Activated naive CD4-positive, alpha-beta T cell treated with anti-CD3 and anti-CD28 coated beads for 36 hours (primary cell): ENCODE measurements at regions of chr3 and their contacts with region 1.

Region 1: GRCh38 chr3:171459942-171460724 is at the start of gene TNIK:
- DNase-seq: peak; percentile 96
- H3K4me3 Mint-ChIP-seq: peak within 1 kb of the TSS; percentile 84
- H3K27ac Mint-ChIP-seq: peak within 1 kb of the TSS; percentile 88
- H3K4me1 Mint-ChIP-seq: peaks cover 36% of the 10 kb centered on the region
- H3K27me3 Mint-ChIP-seq: no peaks in the 10 kb centered on the region
- total RNA-seq, gene TNIK: 27.0 to 28.8 TPM

Region 2: GRCh38 chr3:170357176-170357919 is 1102.8 kb before region 1 on chr3 and contains the start of gene SKIL:
- CTCF ChIA-PET with region 1: no interaction called
- intact Hi-C with region 1: loop called (anchors 10 kb)
- DNase-seq: peak; percentile 97
- H3K4me3 Mint-ChIP-seq: peak within 1 kb of the TSS; percentile 96
- H3K27ac Mint-ChIP-seq: peak within 1 kb of the TSS; percentile 95
- H3K4me1 Mint-ChIP-seq: peaks cover 32% of the 10 kb centered on the region
- H3K27me3 Mint-ChIP-seq: no peaks in the 10 kb centered on the region
- total RNA-seq, gene SKIL: 16.3 to 17.5 TPM

Region 3: DNA sequence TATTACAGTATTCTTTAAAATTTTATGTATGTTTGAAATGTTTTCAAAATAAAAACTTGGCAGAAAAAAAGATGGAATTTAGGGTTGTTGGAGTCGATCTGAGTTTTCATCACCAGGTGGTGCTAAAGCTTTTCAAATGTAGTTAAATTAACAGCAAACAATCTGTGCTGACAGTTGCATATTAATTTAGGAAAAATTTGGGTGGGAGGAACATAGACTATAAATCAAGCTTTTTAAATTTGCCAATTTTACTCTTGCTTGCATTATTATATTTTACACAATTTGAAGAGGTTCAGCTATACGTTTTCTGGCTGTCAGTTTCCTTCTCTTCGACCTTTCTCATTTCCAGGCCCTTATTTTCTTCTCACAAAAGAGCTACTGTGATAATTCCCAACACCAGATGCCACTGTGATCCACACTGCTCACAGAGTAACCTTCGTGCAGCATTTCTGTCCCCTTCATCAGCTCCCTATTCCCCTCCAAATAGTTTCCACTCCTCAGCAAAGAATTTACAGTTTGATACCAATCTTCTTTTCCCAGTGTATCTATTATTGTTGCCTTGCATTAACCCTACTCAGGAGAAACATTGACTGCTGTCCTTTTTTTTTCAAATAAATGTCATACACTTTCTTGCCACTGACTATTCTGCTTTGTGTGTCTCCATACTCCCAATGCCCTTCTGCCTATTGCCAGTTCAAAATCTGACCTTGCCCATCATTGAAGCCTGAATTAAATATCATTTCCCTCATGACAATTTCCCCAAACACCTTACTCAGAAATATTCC is 498.3 kb before region 1 on chr3:
- CTCF ChIA-PET with region 1: no interaction called
- intact Hi-C with region 1: loop called (anchors 5 kb)
- DNase-seq: peak; percentile 21
- H3K4me3 Mint-ChIP-seq: no peak overlapping the region
- H3K27ac Mint-ChIP-seq: no peak overlapping the region
- H3K4me1 Mint-ChIP-seq: no peaks in the 10 kb centered on the region
- H3K27me3 Mint-ChIP-seq: peaks cover 3% of the 10 kb centered on the region

Region 4: GRCh38 chr3:171225708-171226107 is 234.4 kb before region 1 on chr3:
- CTCF ChIA-PET with region 1: interaction called, 3 read pairs
- intact Hi-C with region 1: loop called (anchors 1 kb)
- DNase-seq: no peak
- H3K4me3 Mint-ChIP-seq: no peak overlapping the region
- H3K27ac Mint-ChIP-seq: peak overlapping the region; percentile 56
- H3K4me1 Mint-ChIP-seq: peaks cover 50% of the 10 kb centered on the region
- H3K27me3 Mint-ChIP-seq: no peaks in the 10 kb centered on the region

Region 5: GRCh38 chr3:171284308-171285075 is 175.6 kb before region 1 on chr3:
- CTCF ChIA-PET with region 1: no interaction called
- intact Hi-C with region 1: loop called (anchors 1 kb)
- DNase-seq: peak; percentile 55
- H3K4me3 Mint-ChIP-seq: peak overlapping the region; percentile 22
- H3K27ac Mint-ChIP-seq: peak overlapping the region; percentile 76
- H3K4me1 Mint-ChIP-seq: peaks cover 66% of the 10 kb centered on the region
- H3K27me3 Mint-ChIP-seq: no peaks in the 10 kb centered on the region

Region 6: GRCh38 chr3:171407759-171408158 is 52.4 kb before region 1 on chr3:
- CTCF ChIA-PET with region 1: no interaction called
- intact Hi-C with region 1: loop called (anchors 2 kb)
- DNase-seq: peak; percentile 39
- H3K4me3 Mint-ChIP-seq: no peak overlapping the region
- H3K27ac Mint-ChIP-seq: no peak overlapping the region
- H3K4me1 Mint-ChIP-seq: peaks cover 60% of the 10 kb centered on the region
- H3K27me3 Mint-ChIP-seq: no peaks in the 10 kb centered on the region

Region 7: GRCh38 chr3:171561596-171562323 is 101.6 kb after region 1 on chr3:
- CTCF ChIA-PET with region 1: interaction called, 6 read pairs
- intact Hi-C with region 1: loop called (anchors 1 kb)
- DNase-seq: no peak
- H3K4me3 Mint-ChIP-seq: peak overlapping the region; percentile 40
- H3K27ac Mint-ChIP-seq: peak overlapping the region; percentile 88
- H3K4me1 Mint-ChIP-seq: peaks cover 22% of the 10 kb centered on the region
- H3K27me3 Mint-ChIP-seq: no peaks in the 10 kb centered on the region